Activated CD4-positive, alpha-beta T cell treated with anti-CD3 and anti-CD28 coated beads, Interleukin-2, amount 10 ng/mL, durations not matched to agents 24 days and 14 days (primary cell): ENCODE measurements at regions of chr17 and their contacts with region 1.

Region 1: DNA sequence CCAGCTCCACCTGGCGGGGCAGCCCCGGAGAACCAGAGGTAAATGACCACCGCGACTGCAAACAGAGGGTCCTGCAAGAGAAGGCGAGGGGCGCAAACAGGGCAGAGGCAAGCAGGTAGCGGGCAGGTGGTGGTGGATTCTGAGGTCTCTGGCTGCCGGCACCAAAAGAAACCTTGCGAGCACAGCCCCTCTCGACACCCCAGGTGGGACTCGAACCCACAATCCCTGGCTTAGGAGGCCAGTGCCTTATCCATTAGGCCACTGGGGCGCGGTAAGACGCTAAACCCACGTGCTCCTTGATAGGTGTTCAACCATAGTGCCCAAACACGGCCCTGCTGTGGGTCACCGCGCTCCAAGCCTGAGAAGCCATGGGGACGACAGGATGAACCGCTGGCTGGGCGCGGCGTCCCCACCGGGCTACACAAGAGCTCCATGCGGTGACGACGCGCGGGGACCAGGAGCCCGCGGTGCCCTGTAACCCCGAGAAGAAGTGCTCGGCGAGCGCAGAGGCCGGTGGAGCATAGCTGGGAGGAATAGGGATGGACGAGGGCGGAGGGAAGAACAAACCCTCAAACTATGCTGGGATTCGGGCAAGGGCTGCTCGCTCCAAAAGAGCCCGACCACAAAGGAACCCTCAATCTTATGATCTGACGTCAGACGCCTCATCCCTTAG is 12.4 kb downstream of the ATP5PD start:
- DNase-seq: peak; percentile 95
- H3K4me3 Mint-ChIP-seq: peak overlapping the region; percentile 98
- H3K27ac Mint-ChIP-seq: peak overlapping the region; percentile 97
- H3K4me1 Mint-ChIP-seq: peaks cover 53% of the 10 kb centered on the region
- H3K27me3 Mint-ChIP-seq: peaks cover 6% of the 10 kb centered on the region

Region 2: DNA sequence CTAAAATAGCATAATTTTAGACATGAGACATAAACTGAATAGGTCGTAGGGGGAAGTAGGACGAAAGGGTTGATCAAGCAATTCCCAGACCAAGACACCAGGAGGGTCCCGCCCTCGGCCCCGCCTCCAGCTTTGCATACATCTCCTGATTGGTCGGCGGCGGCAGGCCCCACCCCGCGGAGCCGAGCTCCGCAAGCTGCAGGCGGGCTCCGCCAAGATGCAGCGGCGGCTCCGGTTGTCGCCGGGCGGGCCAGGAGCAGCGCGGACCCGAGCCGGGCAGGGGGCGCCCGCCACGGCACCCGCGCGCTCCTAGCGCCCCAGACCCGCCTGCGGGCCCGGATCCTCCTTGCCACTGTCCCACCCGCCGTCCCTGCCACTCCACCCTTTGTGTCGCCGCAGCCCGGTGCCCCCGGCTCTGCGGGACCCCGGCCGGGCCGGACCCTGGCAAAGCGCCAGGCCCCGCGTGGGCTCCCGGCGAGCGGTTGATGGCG is 46.9 kb before region 1 on chr17 and contains the start of gene CDR2L:
- intact Hi-C with region 1: loop called (anchors 2 kb)
- DNase-seq: peak; percentile 99
- H3K4me3 Mint-ChIP-seq: peak within 1 kb of the TSS; percentile 87
- H3K27ac Mint-ChIP-seq: no peak within 1 kb of the TSS
- H3K4me1 Mint-ChIP-seq: peaks cover 12% of the 10 kb centered on the region
- H3K27me3 Mint-ChIP-seq: peaks cover 47% of the 10 kb centered on the region
- total RNA-seq, gene CDR2L: 1.4 and 1.8 TPM in 2 replicates

Region 3: DNA sequence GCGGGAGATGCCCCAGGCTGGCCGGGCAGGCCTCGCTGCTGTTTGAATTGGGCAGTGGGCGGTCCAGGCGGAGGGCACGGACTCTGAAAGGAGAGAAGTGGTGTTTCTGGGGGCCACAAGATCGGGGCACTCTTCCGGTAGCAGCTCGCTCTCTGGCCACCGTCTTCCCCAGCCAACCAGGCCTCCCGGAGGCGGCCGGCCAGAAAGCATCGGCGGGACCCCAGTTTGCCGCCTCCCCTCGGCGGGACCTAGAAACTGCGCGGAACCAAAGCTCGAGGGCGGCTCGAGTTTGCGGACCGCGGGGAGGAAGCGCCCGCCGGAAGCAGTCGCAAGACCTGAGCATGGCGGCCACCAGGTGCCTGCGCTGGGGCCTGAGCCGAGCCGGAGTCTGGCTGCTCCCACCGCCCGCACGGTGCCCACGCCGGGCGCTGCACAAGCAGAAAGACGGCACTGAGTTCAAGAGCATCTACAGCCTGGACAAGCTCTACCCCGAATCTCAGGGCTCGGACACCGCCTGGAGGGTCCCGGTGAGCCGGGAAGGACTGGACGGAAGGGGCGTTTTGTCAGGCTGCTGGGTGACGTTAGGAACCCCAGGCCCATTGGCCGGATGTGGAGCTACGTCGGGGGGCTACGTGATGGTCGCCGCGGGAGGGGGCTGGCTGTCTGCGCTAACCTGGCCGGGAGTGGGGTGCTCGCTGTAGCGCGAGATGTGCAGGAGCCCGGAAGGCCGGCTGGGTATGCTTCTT is 21.9 kb before region 1 on chr17 and contains the start of gene MRPL58:
- intact Hi-C with region 1: loop called (anchors 1 kb)
- DNase-seq: peak; percentile 95
- H3K4me3 Mint-ChIP-seq: peak within 1 kb of the TSS; percentile 97
- H3K27ac Mint-ChIP-seq: peak within 1 kb of the TSS; percentile 93
- H3K4me1 Mint-ChIP-seq: peaks cover 21% of the 10 kb centered on the region
- H3K27me3 Mint-ChIP-seq: no peaks in the 10 kb centered on the region
- total RNA-seq, gene MRPL58: 73.3 and 74.3 TPM in 2 replicates

Region 4: GRCh38 chr17:75046582-75047289 is 12.4 kb after region 1 on chr17 and contains the starts of genes ATP5PD and KCTD2:
- intact Hi-C with region 1: loop called (anchors 1 kb)
- DNase-seq: peak; percentile 98
- H3K4me3 Mint-ChIP-seq: peak within 1 kb of the TSS; percentile 99
- H3K27ac Mint-ChIP-seq: peak within 1 kb of the TSS; percentile 95
- H3K4me1 Mint-ChIP-seq: peaks cover 29% of the 10 kb centered on the region
- H3K27me3 Mint-ChIP-seq: no peaks in the 10 kb centered on the region
- total RNA-seq, gene ATP5PD: 158 and 161 TPM in 2 replicates
- total RNA-seq, gene KCTD2: 18.7 and 19.0 TPM in 2 replicates